ENCODE measurements at regions of chr11 and their contacts with region 1.

Region 1: GRCh38 chr11:36746886-36747710 is 149.1 kb upstream of the RAG2 start:
- DNase-seq: peak; percentile 71
- CTCF ChIP-seq: peak; percentile 98

Region 2: GRCh38 chr11:36300651-36301050 is 446.4 kb before region 1 on chr11:
- CTCF ChIA-PET with region 1: interaction called, 14 read pairs
- POLR2A ChIA-PET with region 1: no interaction called
- DNase-seq: no peak
- CTCF ChIP-seq: no peak

Region 3: GRCh38 chr11:36431429-36432092 is 315.5 kb before region 1 on chr11:
- CTCF ChIA-PET with region 1: no interaction called
- POLR2A ChIA-PET with region 1: no interaction called
- DNase-seq: no peak
- CTCF ChIP-seq: no peak

Region 4: DNA sequence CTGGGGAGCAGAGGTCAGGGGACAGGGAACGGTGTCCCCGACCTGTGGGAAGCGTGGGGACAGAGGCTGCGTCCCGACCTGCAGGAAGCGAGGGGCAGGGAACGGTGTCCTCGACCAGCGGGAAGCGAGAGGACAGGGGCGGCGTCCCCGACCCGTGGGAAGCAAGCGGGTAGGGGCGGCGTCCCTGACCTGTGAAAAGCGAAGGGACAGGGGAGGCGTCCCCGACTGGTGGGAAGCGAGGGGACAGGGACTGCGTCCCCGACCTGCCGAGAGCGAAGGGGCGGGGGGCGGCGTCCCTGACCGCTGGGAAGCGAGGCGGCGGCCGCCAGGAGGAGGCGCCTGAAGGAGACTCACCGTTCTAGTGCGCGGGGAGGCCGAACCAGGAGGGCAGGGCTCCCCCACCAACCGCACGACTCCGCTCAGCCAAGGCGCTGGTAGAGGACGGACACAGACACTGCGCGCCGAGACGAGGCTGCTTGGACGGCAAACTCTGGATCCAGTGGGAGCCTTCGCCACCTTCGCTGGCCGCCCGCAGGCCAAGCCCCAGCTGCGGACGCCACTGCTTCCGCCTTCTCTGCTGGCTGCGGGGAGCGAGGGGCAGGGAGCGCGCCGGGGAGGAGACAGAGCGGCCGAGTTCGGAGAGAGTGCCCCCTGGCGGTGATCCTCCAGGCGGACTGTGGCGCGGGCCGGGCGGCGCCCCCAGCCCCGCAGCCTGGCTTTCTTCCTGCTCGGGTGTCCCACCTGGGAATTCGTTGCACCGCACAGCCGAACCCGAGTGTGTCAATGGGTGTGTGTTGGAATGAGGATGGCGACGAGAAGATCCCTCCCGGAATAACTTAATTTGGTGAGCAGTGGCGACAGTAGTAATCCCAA is 237.2 kb before region 1 on chr11 and contains the start of gene TRAF6:
- CTCF ChIA-PET with region 1: interaction called, 13 read pairs
- POLR2A ChIA-PET with region 1: no interaction called
- DNase-seq: peak; percentile 94
- CTCF ChIP-seq: peak; percentile 92

Region 5: DNA sequence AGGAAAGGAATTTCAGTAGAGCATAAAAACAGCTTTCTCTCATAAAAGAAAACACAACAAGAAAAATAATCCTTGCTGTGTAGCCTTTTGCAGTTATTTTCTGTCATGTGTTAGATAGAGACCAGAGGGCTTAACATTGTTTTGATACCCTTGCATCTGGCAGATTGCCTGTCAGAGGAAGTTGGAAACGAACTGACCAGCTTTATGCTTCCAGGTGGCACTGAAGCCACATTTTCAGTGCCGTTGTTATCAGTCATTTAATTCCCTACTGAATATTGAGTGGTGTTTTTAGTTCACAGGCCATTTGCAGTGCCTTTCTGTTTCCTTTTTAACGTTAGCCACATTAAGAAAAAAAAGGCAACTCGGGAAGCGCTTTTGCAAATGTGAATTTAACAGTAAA is 127.6 kb before region 1 on chr11:
- CTCF ChIA-PET with region 1: interaction called, 11 read pairs
- POLR2A ChIA-PET with region 1: no interaction called
- DNase-seq: no peak
- CTCF ChIP-seq: no peak

Region 6: GRCh38 chr11:36702330-36703055 is 44.6 kb before region 1 on chr11:
- CTCF ChIA-PET with region 1: interaction called, 504 read pairs
- POLR2A ChIA-PET with region 1: no interaction called
- DNase-seq: peak; percentile 57
- CTCF ChIP-seq: peak; percentile 77

Region 7: DNA sequence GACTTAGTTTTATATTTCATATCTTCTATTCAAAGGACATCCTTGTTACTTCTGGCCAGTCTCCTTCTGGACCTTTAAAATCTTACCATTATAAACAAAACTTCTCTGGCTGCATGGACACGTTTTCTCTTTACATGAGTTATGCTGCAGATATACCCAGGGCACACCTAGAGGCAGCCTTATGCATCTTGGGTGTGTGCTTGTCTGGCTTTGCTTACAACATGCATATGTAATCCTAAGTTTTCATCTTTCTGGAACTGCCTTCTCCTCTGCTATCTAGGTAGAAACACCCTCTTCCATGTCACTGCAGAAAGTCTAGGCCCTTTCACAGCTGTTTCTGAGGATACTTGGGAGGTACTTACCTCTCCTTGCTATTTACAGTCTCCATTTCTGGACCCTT is 36.7 kb after region 1 on chr11:
- CTCF ChIA-PET with region 1: interaction called, 17 read pairs
- POLR2A ChIA-PET with region 1: no interaction called
- DNase-seq: no peak
- CTCF ChIP-seq: no peak